ENCODE measurements at regions of chr10 and their contacts with region 1.

Region 1: GRCh38 chr10:87066865-87067264 is 27.8 kb downstream of the GLUD1 start:
- DNase-seq: no peak
- ATAC-seq: no peak
- H3K4me3 ChIP-seq: no peak overlapping the region
- H3K27ac ChIP-seq: no peak overlapping the region
- H3K4me1 ChIP-seq: no peaks in the 10 kb centered on the region
- H3K27me3 ChIP-seq: no peaks in the 10 kb centered on the region
- CTCF ChIP-seq: no peak
- POLR2A ChIP-seq: no peak
- RAD21 ChIP-seq: no peak

Region 2: DNA sequence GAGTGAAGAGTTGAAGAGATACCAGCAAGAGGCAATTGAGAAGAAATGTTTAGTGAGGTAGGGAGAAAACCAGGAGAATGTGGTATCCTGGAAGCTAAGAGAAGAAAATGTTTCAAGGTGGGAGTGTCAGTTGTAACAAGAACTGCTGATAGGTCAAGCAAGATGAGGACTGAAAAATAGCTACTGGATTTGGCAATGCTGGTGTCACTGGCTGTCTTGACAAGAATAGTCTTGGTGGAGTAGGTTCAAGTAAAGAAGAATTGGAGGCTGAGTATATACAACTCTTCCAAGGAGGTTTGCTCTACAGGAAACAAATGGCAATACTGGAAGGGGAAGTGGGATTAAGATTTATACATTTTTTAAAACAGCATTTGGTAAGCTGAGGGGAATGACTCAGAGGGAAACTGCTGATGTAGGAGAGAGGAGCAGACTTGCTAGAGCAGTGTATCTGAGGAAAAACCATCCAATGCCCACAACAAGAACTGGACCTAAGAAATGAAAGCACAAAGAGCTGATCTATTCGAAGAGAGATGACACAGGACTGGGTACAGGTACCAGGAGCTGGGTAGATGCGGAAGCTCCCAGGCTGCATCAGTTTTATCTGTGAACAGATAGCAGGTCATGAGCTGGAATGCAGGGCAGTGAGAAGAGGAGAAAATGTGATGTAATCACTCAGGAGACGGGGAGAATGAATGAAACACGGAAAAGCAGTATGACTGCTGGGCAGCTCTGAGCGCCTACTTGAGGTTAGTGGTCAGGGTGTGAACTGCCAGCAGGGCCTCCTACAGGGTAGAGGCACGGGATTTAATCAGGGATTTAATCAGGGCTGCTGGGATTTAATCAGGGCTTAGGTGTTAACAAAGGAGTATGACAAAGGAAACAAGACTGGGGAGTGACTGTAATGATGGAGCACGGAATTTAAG is 12.2 kb before region 1 on chr10:
- CTCF ChIA-PET with region 1: no interaction called
- POLR2A ChIA-PET with region 1: no interaction called
- RAD21 ChIA-PET with region 1: no interaction called
- intact Hi-C with region 1: loop called (anchors 1 kb)
- DNase-seq: no peak
- ATAC-seq: no peak; the same call in 1 of the 2 replicates
- H3K4me3 ChIP-seq: no peak overlapping the region
- H3K27ac ChIP-seq: no peak overlapping the region
- H3K4me1 ChIP-seq: no peaks in the 10 kb centered on the region
- H3K27me3 ChIP-seq: no peaks in the 10 kb centered on the region
- CTCF ChIP-seq: peak in 1 of 3 experiments; percentile 18; a peak in 1 of 6 replicates
- POLR2A ChIP-seq: no peak
- RAD21 ChIP-seq: no peak

Region 3: GRCh38 chr10:87094373-87095235 is 27.7 kb after region 1 on chr10 and contains the starts of genes GLUD1 and SHLD2:
- CTCF ChIA-PET with region 1: no interaction called
- POLR2A ChIA-PET with region 1: no interaction called
- RAD21 ChIA-PET with region 1: no interaction called
- intact Hi-C with region 1: no loop called
- DNase-seq: peak; percentile 87
- ATAC-seq: peak; percentile 84
- H3K4me3 ChIP-seq: peak within 1 kb of the TSS; percentile 80 to 81
- H3K27ac ChIP-seq: peak within 1 kb of the TSS; percentile 93
- H3K4me1 ChIP-seq: peaks cover 25 to 29% of the 10 kb centered on the region in 2 experiments; a peak in 3 of 4 replicates
- H3K27me3 ChIP-seq: no peaks in the 10 kb centered on the region
- CTCF ChIP-seq: no peak
- POLR2A ChIP-seq: peak; percentile 69
- RAD21 ChIP-seq: no peak
- total RNA-seq, gene GLUD1: 131 TPM
- total RNA-seq, gene SHLD2: 28.9 TPM

Measured in HCT116 (cell line).